Mammary epithelial cell (primary cell): ENCODE measurements at regions of chr5 and their contacts with region 1.

Region 1: GRCh38 chr5:8394962-8395361 is 526.0 kb downstream of the MTRR start:
- DNase-seq: no peak
- H3K4me3 ChIP-seq: no peak overlapping the region
- H3K27ac ChIP-seq: no peak overlapping the region
- H3K4me1 ChIP-seq: no peaks in the 10 kb centered on the region
- H3K27me3 ChIP-seq: no peaks in the 10 kb centered on the region
- CTCF ChIP-seq: no peak

Region 2: DNA sequence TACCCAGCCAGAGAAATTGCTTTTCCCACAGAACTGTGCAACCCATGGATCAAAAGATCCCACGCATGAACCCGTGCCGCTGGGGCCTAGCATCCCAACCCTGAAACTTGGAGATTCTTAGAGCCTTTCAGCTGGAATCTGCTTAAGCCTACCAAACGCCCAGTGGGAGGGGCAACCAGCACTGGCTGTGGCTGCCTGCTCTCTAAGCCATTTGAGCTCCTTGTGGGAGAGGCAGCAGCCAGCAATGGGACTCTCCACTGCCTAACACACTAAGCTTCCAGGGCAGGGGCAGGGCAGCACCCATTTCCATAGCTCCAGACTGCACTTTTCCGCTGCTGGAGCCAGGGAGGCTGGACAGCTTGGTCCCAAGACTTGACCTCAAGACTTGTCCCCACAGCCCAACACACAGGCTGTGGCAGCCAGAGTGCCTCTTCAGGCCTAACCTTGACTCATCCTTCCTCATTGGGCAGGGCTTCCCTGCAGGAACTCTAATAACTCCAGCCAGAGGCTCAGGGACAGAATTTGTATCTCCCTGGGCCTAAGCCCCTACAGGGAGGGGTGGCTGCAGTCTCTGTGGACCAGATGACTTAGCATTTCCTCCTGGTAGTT is 88.6 kb before region 1 on chr5:
- CTCF ChIA-PET with region 1: no interaction called
- dilution Hi-C with region 1: loop called (anchors 5 kb)
- in situ Hi-C with region 1: no loop called
- intact Hi-C with region 1: no loop called
- DNase-seq: no peak
- H3K4me3 ChIP-seq: no peak overlapping the region
- H3K27ac ChIP-seq: no peak overlapping the region
- H3K4me1 ChIP-seq: no peaks in the 10 kb centered on the region
- H3K27me3 ChIP-seq: no peaks in the 10 kb centered on the region
- CTCF ChIP-seq: no peak

Region 3: GRCh38 chr5:8436924-8437323 is 42.0 kb after region 1 on chr5:
- CTCF ChIA-PET with region 1: no interaction called
- dilution Hi-C with region 1: no loop called
- in situ Hi-C with region 1: no loop called
- intact Hi-C with region 1: no loop called
- DNase-seq: no peak
- H3K4me3 ChIP-seq: no peak overlapping the region
- H3K27ac ChIP-seq: no peak overlapping the region
- H3K4me1 ChIP-seq: no peaks in the 10 kb centered on the region
- H3K27me3 ChIP-seq: no peaks in the 10 kb centered on the region
- CTCF ChIP-seq: no peak